Mammary epithelial cell (primary cell): ENCODE measurements at regions of chr15 and their contacts with region 1.

Region 1: DNA sequence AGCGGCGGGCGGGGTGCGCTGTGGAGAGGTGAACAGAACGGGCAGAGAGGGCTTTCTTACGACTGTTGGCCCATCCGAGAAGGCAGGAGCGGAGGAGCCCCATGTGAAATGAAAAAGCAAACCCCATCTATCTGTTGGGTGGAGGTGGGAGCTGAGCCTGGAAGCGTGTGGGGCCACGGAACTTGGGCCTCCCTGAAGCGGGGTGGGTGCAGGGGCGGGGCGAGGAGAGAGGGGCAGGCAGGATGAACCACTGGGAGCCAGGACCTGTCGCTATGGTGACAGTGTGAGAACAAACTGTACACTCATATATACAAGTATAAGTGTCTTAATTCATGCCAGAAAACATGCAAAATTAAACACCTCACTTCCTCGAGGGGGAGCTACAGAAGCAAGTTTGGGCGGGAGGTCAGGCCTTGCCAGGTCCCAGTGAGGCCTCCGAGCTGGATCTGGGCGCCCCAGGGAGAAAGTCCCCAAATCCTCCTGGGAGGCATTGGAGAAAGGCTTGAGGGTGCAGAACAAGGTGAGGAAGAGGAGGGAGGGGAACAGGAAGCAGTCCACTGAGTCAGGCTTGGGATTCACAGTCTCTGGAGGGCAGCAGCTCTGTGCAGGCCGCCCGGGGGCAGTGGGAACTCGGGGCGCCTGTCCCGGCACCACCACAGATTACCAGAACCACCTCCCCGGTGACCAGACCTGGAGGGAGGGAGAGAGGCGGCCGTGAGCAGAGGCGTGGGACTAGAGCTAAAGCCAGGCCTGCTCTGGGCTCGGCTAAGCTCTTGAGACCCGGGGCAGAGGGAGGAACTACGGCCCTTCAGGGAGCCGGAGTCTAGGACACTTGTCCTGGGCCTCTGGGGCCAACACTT is 34.8 kb downstream of the RBPMS2 start:
- DNase-seq: peak; percentile 50
- H3K4me3 ChIP-seq: no peak overlapping the region
- H3K27ac ChIP-seq: no peak overlapping the region
- H3K4me1 ChIP-seq: no peaks in the 10 kb centered on the region
- H3K27me3 ChIP-seq: no peaks in the 10 kb centered on the region
- CTCF ChIP-seq: peak in 1 of 2 donors; percentile 31

Region 2: GRCh38 chr15:64754663-64755426 is 14.3 kb after region 1 on chr15:
- CTCF ChIA-PET with region 1: interaction called, 21 read pairs
- dilution Hi-C with region 1: no loop called
- in situ Hi-C with region 1: no loop called
- intact Hi-C with region 1: no loop called
- DNase-seq: no peak
- H3K4me3 ChIP-seq: no peak overlapping the region
- H3K27ac ChIP-seq: no peak overlapping the region
- H3K4me1 ChIP-seq: no peaks in the 10 kb centered on the region
- H3K27me3 ChIP-seq: peaks cover 2% of the 10 kb centered on the region
- CTCF ChIP-seq: no peak

Region 3: GRCh38 chr15:64809649-64810496 is 69.3 kb after region 1 on chr15:
- CTCF ChIA-PET with region 1: interaction called, 12 read pairs
- dilution Hi-C with region 1: no loop called
- in situ Hi-C with region 1: no loop called
- intact Hi-C with region 1: loop called (anchors 2 kb)
- DNase-seq: peak; percentile 41
- H3K4me3 ChIP-seq: no peak overlapping the region
- H3K27ac ChIP-seq: no peak overlapping the region
- H3K4me1 ChIP-seq: no peaks in the 10 kb centered on the region
- H3K27me3 ChIP-seq: no peaks in the 10 kb centered on the region
- CTCF ChIP-seq: peak; percentile 86 to 97